Activated CD4-positive, alpha-beta T cell treated with anti-CD3 and anti-CD28 coated beads, Interleukin-2, amount 10 ng/mL, durations not matched to agents 24 days and 14 days (primary cell): ENCODE measurements at regions of chr1 and their contacts with region 1.

Region 1: DNA sequence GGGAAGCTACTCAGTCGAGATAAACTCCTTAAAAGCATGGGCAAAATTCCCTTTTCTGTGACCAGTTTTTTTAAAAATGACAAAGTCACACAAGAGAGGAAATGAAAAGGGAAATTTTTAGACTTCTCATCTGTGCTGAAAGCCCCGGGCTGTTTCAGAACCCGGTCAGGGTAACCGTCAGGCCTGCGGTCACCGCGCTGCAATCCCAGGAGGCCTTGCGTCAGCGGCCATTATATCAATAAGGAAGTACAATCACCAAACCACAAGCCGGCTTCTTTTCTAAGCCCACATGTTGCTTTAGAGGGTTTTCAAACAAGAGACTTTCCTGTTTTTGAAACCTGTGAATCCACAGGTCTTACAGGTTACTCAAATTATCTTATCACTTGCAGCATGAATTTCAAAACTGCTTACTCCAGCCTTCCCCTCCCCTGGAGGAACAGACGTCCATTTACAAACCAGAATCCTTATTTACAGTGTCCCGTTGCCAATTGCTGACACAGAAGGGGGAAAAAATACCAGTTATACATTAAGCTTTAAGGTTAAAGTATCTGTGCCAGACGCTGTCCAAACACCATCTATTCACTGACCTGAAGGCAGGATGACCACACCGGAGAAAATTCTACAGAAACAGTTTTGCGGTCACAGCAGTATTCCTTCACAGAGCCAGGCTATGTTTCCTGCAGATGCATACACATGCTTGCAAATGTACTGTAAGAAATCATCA is 165.3 kb downstream of the TOMM20 start:
- DNase-seq: peak; percentile 96
- H3K4me3 Mint-ChIP-seq: peak overlapping the region; percentile 79
- H3K27ac Mint-ChIP-seq: peak overlapping the region; percentile 97
- H3K4me1 Mint-ChIP-seq: peaks cover 69% of the 10 kb centered on the region
- H3K27me3 Mint-ChIP-seq: no peaks in the 10 kb centered on the region

Region 2: DNA sequence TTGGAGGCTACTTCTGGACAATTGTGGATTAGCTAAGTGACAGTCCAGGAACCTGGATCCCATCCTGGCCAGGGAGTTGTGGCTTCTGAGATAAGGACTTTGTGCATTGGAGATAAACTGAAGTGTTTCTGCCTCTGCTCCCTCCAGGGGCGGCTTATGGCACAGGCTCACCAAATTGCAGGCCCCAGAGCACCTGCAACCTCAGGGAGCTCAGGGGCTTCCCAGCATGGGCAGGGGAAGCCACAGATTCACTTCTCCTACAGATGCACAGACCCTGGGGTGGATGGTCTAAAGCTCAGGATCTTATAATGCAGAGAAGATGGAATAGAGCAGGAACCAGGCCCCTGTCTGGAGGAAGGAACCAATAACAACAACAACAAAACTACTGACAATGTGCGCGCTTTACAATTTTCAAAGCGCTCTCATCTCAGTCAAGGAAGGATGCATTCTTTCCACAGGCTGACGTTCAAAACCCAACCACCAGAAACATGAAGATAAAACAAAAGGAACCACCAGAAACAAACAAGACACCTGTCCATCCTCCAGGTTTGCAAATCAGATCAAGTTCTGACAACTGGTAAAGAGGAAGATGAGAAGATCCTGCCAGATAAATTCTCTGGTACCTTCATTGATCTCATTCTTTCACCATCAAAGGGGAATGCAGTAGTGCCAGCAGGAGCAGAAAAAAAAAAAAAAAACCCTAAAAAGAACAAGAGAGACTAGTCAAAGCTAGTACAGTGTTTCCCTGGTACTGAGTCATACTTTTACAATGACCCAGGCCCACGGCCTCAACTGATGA is 232.4 kb before region 1 on chr1:
- intact Hi-C with region 1: loop called (anchors 1 kb)
- DNase-seq: peak; percentile 86
- H3K4me3 Mint-ChIP-seq: peak overlapping the region; percentile 68
- H3K27ac Mint-ChIP-seq: peak overlapping the region; percentile 96
- H3K4me1 Mint-ChIP-seq: peaks cover 77% of the 10 kb centered on the region
- H3K27me3 Mint-ChIP-seq: no peaks in the 10 kb centered on the region

Region 3: GRCh38 chr1:234933475-234933874 is 29.9 kb before region 1 on chr1:
- intact Hi-C with region 1: loop called (anchors 1 kb)
- DNase-seq: peak; percentile 72
- H3K4me3 Mint-ChIP-seq: peak overlapping the region; percentile 18
- H3K27ac Mint-ChIP-seq: peak overlapping the region; percentile 84
- H3K4me1 Mint-ChIP-seq: peaks cover 55% of the 10 kb centered on the region
- H3K27me3 Mint-ChIP-seq: no peaks in the 10 kb centered on the region

Region 4: DNA sequence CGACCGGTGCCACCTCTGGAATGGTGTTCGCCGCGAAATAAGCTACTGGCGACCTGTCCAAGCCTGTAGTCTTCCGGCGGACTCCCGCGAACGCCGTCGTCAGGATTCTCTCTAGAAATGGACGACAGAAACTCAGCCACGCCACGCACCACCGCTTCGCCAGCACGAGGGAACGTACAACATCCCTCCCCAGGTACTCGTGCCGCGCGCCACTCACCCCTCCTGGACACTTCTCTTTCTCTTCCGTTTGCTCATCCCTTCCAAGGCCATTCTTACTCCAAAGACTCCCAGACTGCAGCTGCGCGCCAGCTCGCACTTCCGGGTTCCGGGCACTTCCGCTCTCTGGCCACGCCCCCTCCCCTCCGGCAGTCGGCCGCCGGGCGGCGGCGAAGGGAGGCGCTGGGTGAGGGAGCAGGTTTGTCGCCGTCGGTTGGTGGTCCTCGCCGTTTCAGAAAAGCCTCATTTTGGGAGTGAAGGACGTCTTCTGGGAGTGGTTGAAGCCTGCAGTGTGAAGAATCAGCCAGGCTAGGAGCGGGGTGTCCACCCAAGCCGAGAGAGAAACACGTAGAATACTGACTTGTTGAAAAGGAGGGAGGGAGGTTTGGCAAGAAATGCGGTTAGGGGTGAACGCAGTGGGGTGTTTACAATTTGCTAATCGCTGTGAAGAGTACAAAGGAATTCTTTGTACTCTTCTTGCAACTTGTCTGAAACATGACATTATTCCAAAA is 197.8 kb after region 1 on chr1 and contains the start of gene RBM34:
- intact Hi-C with region 1: no loop called
- DNase-seq: peak; percentile 98
- H3K4me3 Mint-ChIP-seq: peak within 1 kb of the TSS; percentile 93
- H3K27ac Mint-ChIP-seq: peak within 1 kb of the TSS; percentile 94
- H3K4me1 Mint-ChIP-seq: peaks cover 12% of the 10 kb centered on the region
- H3K27me3 Mint-ChIP-seq: no peaks in the 10 kb centered on the region
- total RNA-seq, gene RBM34: 123 and 135 TPM in 2 replicates